Testis (tissue), 5 donors: ENCODE measurements at regions of chr22 and their contacts with region 1.

Region 1: DNA sequence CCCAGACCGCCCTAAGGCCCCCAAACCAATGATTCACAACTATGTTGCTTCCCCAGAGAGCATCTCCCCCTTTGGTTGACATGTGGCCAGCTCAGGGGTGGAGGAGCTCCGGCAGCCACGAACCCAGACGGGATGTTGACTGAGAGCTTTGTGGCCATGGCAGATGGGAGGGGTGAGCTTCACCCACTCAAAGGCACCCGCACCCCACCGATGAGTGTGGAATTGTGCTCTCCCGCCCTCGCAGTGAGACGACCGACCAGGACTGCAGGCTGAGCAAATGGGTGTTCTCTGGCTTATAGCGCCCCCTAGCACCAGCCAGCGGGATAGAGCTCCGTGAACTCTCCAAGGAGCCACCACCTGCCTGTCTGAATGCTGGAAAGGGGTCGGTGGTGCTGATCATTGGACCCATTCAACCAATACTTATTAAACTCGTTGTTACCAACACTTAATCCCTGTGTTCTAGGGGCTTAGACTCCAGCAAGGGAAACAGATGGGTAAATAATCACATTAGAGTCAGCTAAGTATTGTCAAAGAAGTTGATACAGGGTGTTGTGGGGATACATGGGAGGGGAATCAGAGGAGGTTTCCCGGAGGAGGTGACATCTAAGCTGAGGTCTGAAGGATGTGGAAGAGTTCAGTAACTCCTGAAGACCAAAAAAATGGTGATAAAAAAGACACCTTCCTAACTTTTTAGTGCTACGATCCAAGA is 4.5 kb upstream of the TIMP3 start:
- DNase-seq: peak; percentile 84
- H3K4me3 ChIP-seq: no peak overlapping the region
- H3K27ac ChIP-seq: no peak overlapping the region
- H3K4me1 ChIP-seq: peaks cover 14% of the 10 kb centered on the region
- H3K27me3 ChIP-seq: no peaks in the 10 kb centered on the region
- CTCF ChIP-seq: peak; percentile 72 to 90 (median 85)
- POLR2A ChIP-seq: no peak

Region 2: DNA sequence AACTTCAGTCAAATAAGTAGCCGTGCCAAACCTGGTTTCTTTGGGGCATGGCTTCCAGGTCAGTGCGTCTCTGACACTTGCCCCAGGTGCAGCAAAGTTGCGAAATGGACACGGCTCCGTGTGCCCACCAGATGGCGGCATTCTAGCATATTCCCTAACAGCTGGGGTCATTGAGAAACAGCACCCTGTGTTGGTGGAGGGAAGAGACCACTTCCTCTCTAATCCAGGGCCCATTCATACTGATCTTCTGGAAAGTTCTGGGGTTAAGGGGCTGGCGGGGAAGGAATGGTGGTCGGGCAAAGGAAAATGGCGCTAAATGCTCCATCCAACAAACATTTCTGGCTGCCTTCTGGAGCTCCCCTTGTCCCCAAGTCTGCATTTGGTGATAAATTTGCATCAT is 136.7 kb before region 1 on chr22:
- intact Hi-C with region 1: loop called (anchors 10 kb)
- DNase-seq: peak; percentile 83
- H3K4me3 ChIP-seq: no peak overlapping the region
- H3K27ac ChIP-seq: no peak overlapping the region
- H3K4me1 ChIP-seq: no peaks in the 10 kb centered on the region
- H3K27me3 ChIP-seq: no peaks in the 10 kb centered on the region
- CTCF ChIP-seq: peak; percentile 57 to 76 (median 64)
- POLR2A ChIP-seq: no peak